Mammary epithelial cell (primary cell): ENCODE measurements at regions of chr5 and their contacts with region 1.

Region 1: DNA sequence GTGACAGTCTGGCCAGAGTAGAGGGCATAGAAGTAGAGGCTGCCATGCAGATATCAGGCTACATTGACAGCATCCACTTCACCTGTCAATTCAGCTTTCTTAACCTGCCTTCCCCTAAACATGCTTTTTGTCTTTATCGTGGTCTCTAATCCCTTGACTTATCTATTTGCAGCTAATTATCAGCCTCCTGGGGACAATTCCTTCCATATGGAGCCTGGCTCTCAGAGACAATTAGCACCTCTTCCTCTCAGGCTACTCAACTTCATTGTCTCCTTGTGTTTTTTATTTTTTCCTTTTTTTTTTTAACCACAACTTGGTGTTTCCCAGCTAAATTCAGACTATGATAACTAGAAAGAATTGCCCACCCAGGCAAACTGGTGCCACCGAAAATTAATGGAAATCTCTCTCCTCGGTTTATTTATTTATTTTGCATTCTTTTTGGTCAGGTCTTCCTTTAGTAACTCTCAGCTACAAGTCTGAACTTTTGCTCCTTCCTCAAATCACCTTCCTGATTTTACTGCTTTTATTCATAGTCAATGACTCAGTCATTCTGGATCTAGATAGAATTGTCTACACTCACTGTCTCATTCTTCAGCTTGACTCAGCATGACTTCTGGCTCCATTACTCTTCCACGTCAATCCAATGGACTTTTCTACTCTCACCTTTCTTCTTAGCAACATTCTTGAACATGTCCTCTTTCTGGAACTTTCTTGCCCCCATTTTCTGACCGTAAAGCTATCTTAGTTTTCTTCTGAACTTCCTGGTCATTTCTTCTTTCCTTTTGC is 63.0 kb upstream of the BASP1 start:
- DNase-seq: peak; percentile 91
- H3K4me3 ChIP-seq: no peak overlapping the region
- H3K27ac ChIP-seq: peak overlapping the region; percentile 67
- H3K4me1 ChIP-seq: peaks cover 10% of the 10 kb centered on the region
- H3K27me3 ChIP-seq: no peaks in the 10 kb centered on the region
- CTCF ChIP-seq: no peak

Region 2: GRCh38 chr5:17180957-17181723 is 26.7 kb after region 1 on chr5:
- CTCF ChIA-PET with region 1: no interaction called
- dilution Hi-C with region 1: no loop called
- in situ Hi-C with region 1: no loop called
- intact Hi-C with region 1: loop called (anchors 2 kb)
- DNase-seq: peak; percentile 99
- H3K4me3 ChIP-seq: no peak overlapping the region
- H3K27ac ChIP-seq: peak overlapping the region; percentile 85
- H3K4me1 ChIP-seq: peaks cover 32% of the 10 kb centered on the region
- H3K27me3 ChIP-seq: no peaks in the 10 kb centered on the region
- CTCF ChIP-seq: peak in 1 of 2 donors; percentile 4

Region 3: GRCh38 chr5:17497446-17497845 is 343.0 kb after region 1 on chr5:
- CTCF ChIA-PET with region 1: no interaction called
- dilution Hi-C with region 1: no loop called
- in situ Hi-C with region 1: no loop called
- intact Hi-C with region 1: no loop called
- DNase-seq: no peak
- H3K4me3 ChIP-seq: no peak overlapping the region
- H3K27ac ChIP-seq: no peak overlapping the region
- H3K4me1 ChIP-seq: no peaks in the 10 kb centered on the region
- H3K27me3 ChIP-seq: no peaks in the 10 kb centered on the region
- CTCF ChIP-seq: no peak